ENCODE measurements at regions of chr11 and their contacts with region 1.

Region 1: GRCh38 chr11:107573438-107573837 is 7.9 kb upstream of the ALKBH8 start:
- DNase-seq: no peak
- H3K4me3 Mint-ChIP-seq: no peak overlapping the region
- H3K27ac Mint-ChIP-seq: no peak overlapping the region
- H3K4me1 Mint-ChIP-seq: no peaks in the 10 kb centered on the region
- H3K27me3 Mint-ChIP-seq: no peaks in the 10 kb centered on the region
- CTCF ChIP-seq: no peak

Region 2: GRCh38 chr11:107549253-107549953 is 24.0 kb before region 1 on chr11:
- CTCF ChIA-PET with region 1: interaction called, 3 read pairs
- intact Hi-C with region 1: loop called (anchors 1 kb)
- DNase-seq: no peak
- H3K4me3 Mint-ChIP-seq: no peak overlapping the region
- H3K27ac Mint-ChIP-seq: no peak overlapping the region
- H3K4me1 Mint-ChIP-seq: peaks cover 26% of the 10 kb centered on the region
- H3K27me3 Mint-ChIP-seq: no peaks in the 10 kb centered on the region
- CTCF ChIP-seq: no peak

Measured in Calu3 (cell line).